B cell (primary cell): ENCODE measurements at regions of chr9 and their contacts with region 1.

Region 1: GRCh38 chr9:132800038-132800648 is 77.9 kb downstream of the AK8 start:
- DNase-seq: peak; percentile 80
- ATAC-seq: peak; percentile 89
- H3K4me3 ChIP-seq: no peak overlapping the region
- H3K4me3 Mint-ChIP-seq: no peak overlapping the region
- H3K27ac ChIP-seq: no peak overlapping the region
- H3K27ac Mint-ChIP-seq: no peak overlapping the region
- H3K4me1 ChIP-seq: peaks cover 13 to 18% of the 10 kb centered on the region in 2 donors
- H3K4me1 Mint-ChIP-seq: peaks cover 16% of the 10 kb centered on the region
- H3K27me3 ChIP-seq: peaks cover 0 to 20% (median 0%) of the 10 kb centered on the region in 4 experiments
- H3K27me3 Mint-ChIP-seq: peaks cover 29% of the 10 kb centered on the region
- CTCF ChIP-seq: peak; percentile 88

Region 2: DNA sequence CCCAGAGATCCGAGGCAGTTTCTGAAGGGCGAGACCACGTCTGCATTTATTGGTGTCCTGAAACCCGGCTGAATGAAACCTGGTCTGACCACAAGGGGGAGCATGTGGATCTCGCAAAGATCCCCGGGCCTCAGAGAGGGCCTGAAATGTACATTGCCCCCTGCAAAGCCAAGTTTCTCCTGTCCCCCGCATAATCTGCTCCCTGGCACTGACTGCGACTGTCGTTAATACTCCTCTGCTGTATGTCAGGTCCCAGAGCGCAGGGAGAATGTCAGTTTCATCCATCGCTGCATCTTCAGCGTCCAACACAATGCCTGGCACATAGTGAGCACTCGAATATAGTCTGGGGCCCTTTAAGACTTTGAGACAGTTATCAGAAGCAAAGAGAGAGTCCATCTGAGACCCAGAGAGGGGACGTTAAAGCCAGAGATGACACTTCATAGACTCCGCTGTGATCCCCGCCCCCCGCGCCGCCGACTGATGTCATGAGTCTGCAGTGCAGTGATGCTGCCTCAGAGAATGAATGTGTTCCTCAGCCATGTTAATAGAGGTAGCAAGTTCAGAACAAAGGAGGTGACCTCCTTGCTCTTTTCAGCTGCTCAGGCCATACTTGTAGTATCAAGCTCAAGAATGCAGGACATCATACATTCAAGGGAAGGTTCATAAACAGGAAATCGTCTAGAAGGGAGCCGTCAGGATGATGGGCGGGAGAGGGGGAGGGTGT is 292.2 kb before region 1 on chr9:
- CTCF ChIA-PET with region 1: interaction called, 40 read pairs
- POLR2A ChIA-PET with region 1: no interaction called
- intact Hi-C with region 1: no loop called
- DNase-seq: peak; percentile 76
- ATAC-seq: peak; percentile 60
- H3K4me3 ChIP-seq: no peak overlapping the region
- H3K4me3 Mint-ChIP-seq: no peak overlapping the region
- H3K27ac ChIP-seq: no peak overlapping the region
- H3K27ac Mint-ChIP-seq: no peak overlapping the region
- H3K4me1 ChIP-seq: peaks cover 5 to 12% of the 10 kb centered on the region in 2 donors
- H3K4me1 Mint-ChIP-seq: peaks cover 4% of the 10 kb centered on the region
- H3K27me3 ChIP-seq: peaks cover 0 to 18% (median 0%) of the 10 kb centered on the region in 4 experiments
- H3K27me3 Mint-ChIP-seq: peaks cover 6% of the 10 kb centered on the region
- CTCF ChIP-seq: peak; percentile 82

Region 3: GRCh38 chr9:132609829-132610228 is 190.3 kb before region 1 on chr9:
- CTCF ChIA-PET with region 1: no interaction called
- POLR2A ChIA-PET with region 1: no interaction called
- intact Hi-C with region 1: no loop called
- DNase-seq: no peak
- ATAC-seq: no peak
- H3K4me3 ChIP-seq: no peak overlapping the region
- H3K4me3 Mint-ChIP-seq: no peak overlapping the region
- H3K27ac ChIP-seq: no peak overlapping the region
- H3K27ac Mint-ChIP-seq: no peak overlapping the region
- H3K4me1 ChIP-seq: no peaks in the 10 kb centered on the region
- H3K4me1 Mint-ChIP-seq: no peaks in the 10 kb centered on the region
- H3K27me3 ChIP-seq: no peaks in the 10 kb centered on the region
- H3K27me3 Mint-ChIP-seq: no peaks in the 10 kb centered on the region
- CTCF ChIP-seq: no peak

Region 4: GRCh38 chr9:132651254-132651653 is 148.9 kb before region 1 on chr9:
- CTCF ChIA-PET with region 1: no interaction called
- POLR2A ChIA-PET with region 1: no interaction called
- intact Hi-C with region 1: no loop called
- DNase-seq: no peak
- ATAC-seq: no peak
- H3K4me3 ChIP-seq: no peak overlapping the region
- H3K4me3 Mint-ChIP-seq: no peak overlapping the region
- H3K27ac ChIP-seq: no peak overlapping the region
- H3K27ac Mint-ChIP-seq: no peak overlapping the region
- H3K4me1 ChIP-seq: no peaks in the 10 kb centered on the region
- H3K4me1 Mint-ChIP-seq: no peaks in the 10 kb centered on the region
- H3K27me3 ChIP-seq: no peaks in the 10 kb centered on the region
- H3K27me3 Mint-ChIP-seq: no peaks in the 10 kb centered on the region
- CTCF ChIP-seq: no peak

Region 5: DNA sequence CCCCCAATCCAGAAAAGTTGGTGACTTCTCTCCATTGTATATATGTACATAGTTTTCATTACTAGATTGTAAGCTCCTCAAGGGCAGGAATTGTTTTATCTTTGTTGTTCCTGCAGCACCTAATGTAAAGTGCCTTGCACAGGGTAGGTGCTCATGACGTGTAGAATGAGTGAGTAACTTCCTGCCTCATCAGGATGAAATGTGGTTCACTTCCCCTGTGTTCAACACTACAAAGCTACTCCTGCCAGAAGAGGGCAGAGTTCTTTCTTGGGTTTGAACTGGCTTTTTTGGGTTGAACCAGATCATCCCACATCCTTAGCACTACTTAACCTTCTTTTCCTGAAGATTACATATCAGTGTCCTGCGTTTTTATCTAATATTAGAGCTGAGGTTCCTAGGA is 106.0 kb before region 1 on chr9:
- CTCF ChIA-PET with region 1: interaction called, 4 read pairs
- POLR2A ChIA-PET with region 1: no interaction called
- intact Hi-C with region 1: loop called (anchors 1 kb)
- DNase-seq: peak; percentile 24
- ATAC-seq: no peak
- H3K4me3 ChIP-seq: no peak overlapping the region
- H3K4me3 Mint-ChIP-seq: no peak overlapping the region
- H3K27ac ChIP-seq: no peak overlapping the region
- H3K27ac Mint-ChIP-seq: no peak overlapping the region
- H3K4me1 ChIP-seq: no peaks in the 10 kb centered on the region
- H3K4me1 Mint-ChIP-seq: no peaks in the 10 kb centered on the region
- H3K27me3 ChIP-seq: no peaks in the 10 kb centered on the region
- H3K27me3 Mint-ChIP-seq: peaks cover 4% of the 10 kb centered on the region
- CTCF ChIP-seq: no peak

Region 6: DNA sequence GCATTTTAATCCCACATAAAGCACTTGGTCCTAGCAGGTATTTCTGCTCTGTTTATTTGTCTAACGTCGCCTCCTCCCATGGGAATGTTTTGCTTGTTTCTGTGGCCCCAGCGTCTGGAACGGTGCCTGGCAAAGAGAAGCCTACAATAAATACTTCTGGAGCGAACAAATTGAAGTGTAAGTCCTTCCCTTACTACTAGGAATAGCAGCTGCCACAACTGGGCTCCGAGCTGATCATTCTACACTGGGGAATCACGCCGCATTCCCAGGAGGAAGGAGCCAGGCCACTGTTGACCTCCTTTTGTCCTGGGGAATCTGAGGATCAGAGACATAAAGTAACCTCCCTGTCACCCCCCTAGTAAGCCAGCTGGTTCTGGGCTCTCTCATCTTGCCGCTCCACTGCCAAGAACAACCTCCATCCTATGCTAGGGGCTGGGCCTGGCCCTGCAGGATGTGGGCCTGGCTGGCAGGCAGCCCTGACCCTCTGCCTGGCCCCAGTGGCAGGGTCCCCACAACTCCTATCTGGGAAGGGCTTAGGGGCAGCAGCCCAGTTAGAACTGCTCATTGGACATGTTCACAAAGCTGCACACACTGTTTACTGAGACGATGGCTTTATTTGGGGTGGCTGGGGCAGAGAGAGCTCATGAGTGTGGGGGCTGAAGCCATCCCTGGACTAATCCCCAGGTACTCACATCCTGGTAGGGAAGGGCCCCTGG is 47.1 kb before region 1 on chr9:
- CTCF ChIA-PET with region 1: no interaction called
- POLR2A ChIA-PET with region 1: no interaction called
- intact Hi-C with region 1: no loop called
- DNase-seq: no peak
- ATAC-seq: no peak
- H3K4me3 ChIP-seq: no peak overlapping the region
- H3K4me3 Mint-ChIP-seq: no peak overlapping the region
- H3K27ac ChIP-seq: no peak overlapping the region
- H3K27ac Mint-ChIP-seq: no peak overlapping the region
- H3K4me1 ChIP-seq: no peaks in the 10 kb centered on the region
- H3K4me1 Mint-ChIP-seq: no peaks in the 10 kb centered on the region
- H3K27me3 ChIP-seq: no peaks in the 10 kb centered on the region
- H3K27me3 Mint-ChIP-seq: peaks cover 13% of the 10 kb centered on the region
- CTCF ChIP-seq: no peak

Region 7: GRCh38 chr9:132768932-132769905 is 30.9 kb before region 1 on chr9:
- CTCF ChIA-PET with region 1: interaction called, 7 read pairs
- POLR2A ChIA-PET with region 1: no interaction called
- intact Hi-C with region 1: loop called (anchors 1 kb)
- DNase-seq: peak; percentile 78
- ATAC-seq: peak; percentile 74
- H3K4me3 ChIP-seq: peak overlapping the region; percentile 76 to 96 (median 85)
- H3K4me3 Mint-ChIP-seq: peak overlapping the region; percentile 100
- H3K27ac ChIP-seq: peak overlapping the region; percentile 74 to 84
- H3K27ac Mint-ChIP-seq: peak overlapping the region; percentile 100
- H3K4me1 ChIP-seq: peaks cover 10 to 11% of the 10 kb centered on the region in 2 donors
- H3K4me1 Mint-ChIP-seq: peaks cover 9% of the 10 kb centered on the region
- H3K27me3 ChIP-seq: no peaks in the 10 kb centered on the region
- H3K27me3 Mint-ChIP-seq: peaks cover 5% of the 10 kb centered on the region
- CTCF ChIP-seq: peak; percentile 73

Region 8: DNA sequence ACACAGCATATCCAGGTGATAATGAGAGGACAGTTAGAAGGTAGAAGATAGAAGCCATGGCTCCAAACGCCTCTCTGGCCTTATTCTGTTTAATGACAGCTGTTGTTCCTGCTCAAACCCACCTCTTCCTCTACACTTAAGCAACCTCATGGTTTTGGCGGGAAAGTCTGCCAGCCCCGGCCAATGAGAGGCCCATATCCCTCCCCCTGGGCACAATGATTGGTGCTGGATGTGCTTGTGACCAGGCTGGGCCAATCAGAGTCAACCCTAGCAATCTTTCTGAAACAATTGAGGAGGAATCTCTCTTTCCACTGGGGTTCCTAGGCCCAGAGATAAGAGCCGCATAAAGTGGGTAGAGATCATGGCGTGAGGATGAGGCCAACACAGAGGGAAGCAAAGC is 173.6 kb after region 1 on chr9:
- CTCF ChIA-PET with region 1: no interaction called
- POLR2A ChIA-PET with region 1: no interaction called
- intact Hi-C with region 1: loop called (anchors 5 kb)
- DNase-seq: peak; percentile 4
- ATAC-seq: no peak
- H3K4me3 ChIP-seq: no peak overlapping the region
- H3K4me3 Mint-ChIP-seq: no peak overlapping the region
- H3K27ac ChIP-seq: no peak overlapping the region
- H3K27ac Mint-ChIP-seq: no peak overlapping the region
- H3K4me1 ChIP-seq: peaks cover 10 to 22% of the 10 kb centered on the region in 2 donors
- H3K4me1 Mint-ChIP-seq: peaks cover 20% of the 10 kb centered on the region
- H3K27me3 ChIP-seq: peaks cover 0 to 25% (median 5%) of the 10 kb centered on the region in 4 experiments
- H3K27me3 Mint-ChIP-seq: peaks cover 27% of the 10 kb centered on the region
- CTCF ChIP-seq: no peak